Aorta (tissue), 5 donors: ENCODE measurements at regions of chr3 and their contacts with region 1.

Region 1: GRCh38 chr3:16600780-16601539 is 4.3 kb downstream of the DAZL start:
- DNase-seq: peak; percentile 87 to 94
- ATAC-seq: peak; percentile 74
- H3K4me3 ChIP-seq: no peak overlapping the region
- H3K27ac ChIP-seq: no peak overlapping the region
- H3K4me1 ChIP-seq: no peaks in the 10 kb centered on the region
- H3K27me3 ChIP-seq: no peaks in the 10 kb centered on the region

Region 2: DNA sequence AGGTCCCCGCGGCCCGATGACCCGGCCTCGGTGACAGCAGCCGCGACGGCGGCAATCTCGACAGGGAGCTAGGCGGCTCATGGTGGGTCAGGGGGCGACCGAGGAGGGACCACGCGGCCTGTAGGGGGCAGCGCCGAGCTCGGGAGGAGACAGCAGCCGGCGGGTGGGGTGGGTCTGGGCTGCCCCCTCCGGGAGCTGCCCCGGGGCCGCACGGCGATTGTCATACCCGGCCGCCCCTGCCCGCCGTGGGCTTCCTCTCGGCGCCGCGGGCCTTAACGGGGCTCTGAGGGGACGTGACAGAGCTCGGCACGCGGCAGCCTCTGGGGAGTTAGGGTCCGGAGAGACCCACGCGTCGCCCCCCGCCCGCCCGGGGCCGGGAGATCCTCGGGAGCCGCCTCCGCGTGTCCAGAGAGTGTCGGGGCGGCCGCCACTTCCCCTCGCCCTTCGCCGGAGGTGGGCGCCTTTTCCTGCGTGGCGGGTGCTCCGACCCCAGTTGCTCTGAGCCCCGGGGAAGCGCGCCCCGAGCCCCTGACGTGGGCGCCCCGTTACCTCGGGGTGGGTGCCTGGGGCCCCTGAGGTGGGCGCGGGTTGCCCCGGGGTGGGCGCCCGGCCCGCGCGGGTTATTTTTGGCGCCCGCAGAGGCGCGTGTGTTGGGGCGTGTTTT is 283.3 kb after region 1 on chr3:
- intact Hi-C with region 1: loop called (anchors 10 kb)
- DNase-seq: peak; percentile 74 to 90
- ATAC-seq: peak; percentile 88
- H3K4me3 ChIP-seq: peak overlapping the region; percentile 59 to 96
- H3K27ac ChIP-seq: peak overlapping the region; percentile 6 to 43
- H3K4me1 ChIP-seq: peaks cover 0 to 3% of the 10 kb centered on the region in 2 donors
- H3K27me3 ChIP-seq: no peaks in the 10 kb centered on the region

Region 3: GRCh38 chr3:16945330-16945729 is 344.4 kb after region 1 on chr3:
- intact Hi-C with region 1: loop called in 1 of 2 experiments (anchors 10 kb)
- DNase-seq: no peak
- ATAC-seq: no peak
- H3K4me3 ChIP-seq: no peak overlapping the region
- H3K27ac ChIP-seq: no peak overlapping the region
- H3K4me1 ChIP-seq: peaks cover 1 to 2% of the 10 kb centered on the region in 2 donors
- H3K27me3 ChIP-seq: no peaks in the 10 kb centered on the region

Region 4: DNA sequence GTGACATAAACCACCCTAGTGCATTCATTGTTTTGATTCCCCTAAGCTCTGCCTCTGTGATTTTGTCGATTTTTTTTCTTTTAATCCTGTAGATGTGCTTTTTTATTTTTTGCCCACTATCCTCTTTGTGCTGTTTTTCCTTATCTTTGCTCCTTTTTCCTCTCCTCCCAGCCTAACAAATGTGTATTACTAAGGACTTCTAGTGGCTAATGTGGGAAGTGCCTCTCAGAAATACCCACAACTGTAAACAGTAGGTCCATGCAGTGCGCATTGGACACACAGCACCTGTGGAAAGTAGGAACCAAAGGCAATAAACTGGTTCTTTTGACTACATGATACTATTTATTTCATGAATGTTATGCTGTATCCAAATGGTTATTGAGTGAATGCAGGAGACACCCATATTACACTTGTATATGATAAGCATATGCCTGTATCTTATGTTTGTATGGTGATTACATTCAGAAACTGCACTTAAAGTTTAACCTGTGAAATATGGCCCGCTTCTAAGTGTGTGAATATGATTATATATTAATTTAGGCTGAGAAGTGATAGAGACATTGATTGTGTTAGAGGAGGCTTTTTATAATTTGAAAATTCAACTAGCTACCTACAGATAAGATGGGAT is 431.6 kb after region 1 on chr3:
- intact Hi-C with region 1: loop called (anchors 5 kb)
- DNase-seq: no peak
- ATAC-seq: peak; percentile 75
- H3K4me3 ChIP-seq: no peak overlapping the region
- H3K27ac ChIP-seq: no peak overlapping the region
- H3K4me1 ChIP-seq: no peaks in the 10 kb centered on the region
- H3K27me3 ChIP-seq: no peaks in the 10 kb centered on the region

Region 5: DNA sequence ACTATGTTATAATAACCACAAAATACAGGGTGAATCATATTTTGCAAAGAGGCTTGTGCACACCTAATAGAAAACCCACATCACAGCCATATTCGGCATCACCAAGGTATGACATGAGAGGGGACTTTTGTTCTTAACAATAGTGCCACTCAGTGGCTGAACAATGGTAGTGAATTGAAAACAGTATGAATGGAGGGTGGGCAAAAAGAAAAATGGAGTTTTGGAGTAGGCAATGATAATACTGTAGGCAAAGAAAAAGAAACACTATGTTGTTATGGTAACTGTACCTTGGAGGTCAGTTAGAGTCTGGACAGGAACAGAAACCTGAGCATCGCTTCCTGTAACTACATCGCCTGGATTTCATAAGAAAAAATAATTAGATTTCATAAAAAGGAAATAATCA is 632.4 kb after region 1 on chr3:
- intact Hi-C with region 1: loop called (anchors 2 kb)
- DNase-seq: no peak
- ATAC-seq: peak; percentile 76
- H3K4me3 ChIP-seq: no peak overlapping the region
- H3K27ac ChIP-seq: no peak overlapping the region
- H3K4me1 ChIP-seq: peaks cover 0 to 4% of the 10 kb centered on the region in 2 donors
- H3K27me3 ChIP-seq: no peaks in the 10 kb centered on the region

Region 6: GRCh38 chr3:17412950-17413530 is 812.1 kb after region 1 on chr3:
- intact Hi-C with region 1: loop called (anchors 5 to 10 kb)
- DNase-seq: no peak
- ATAC-seq: no peak
- H3K4me3 ChIP-seq: no peak overlapping the region
- H3K27ac ChIP-seq: no peak overlapping the region
- H3K4me1 ChIP-seq: no peaks in the 10 kb centered on the region
- H3K27me3 ChIP-seq: no peaks in the 10 kb centered on the region